ENCODE measurements at regions of chr12 and their contacts with region 1.

Region 1: DNA sequence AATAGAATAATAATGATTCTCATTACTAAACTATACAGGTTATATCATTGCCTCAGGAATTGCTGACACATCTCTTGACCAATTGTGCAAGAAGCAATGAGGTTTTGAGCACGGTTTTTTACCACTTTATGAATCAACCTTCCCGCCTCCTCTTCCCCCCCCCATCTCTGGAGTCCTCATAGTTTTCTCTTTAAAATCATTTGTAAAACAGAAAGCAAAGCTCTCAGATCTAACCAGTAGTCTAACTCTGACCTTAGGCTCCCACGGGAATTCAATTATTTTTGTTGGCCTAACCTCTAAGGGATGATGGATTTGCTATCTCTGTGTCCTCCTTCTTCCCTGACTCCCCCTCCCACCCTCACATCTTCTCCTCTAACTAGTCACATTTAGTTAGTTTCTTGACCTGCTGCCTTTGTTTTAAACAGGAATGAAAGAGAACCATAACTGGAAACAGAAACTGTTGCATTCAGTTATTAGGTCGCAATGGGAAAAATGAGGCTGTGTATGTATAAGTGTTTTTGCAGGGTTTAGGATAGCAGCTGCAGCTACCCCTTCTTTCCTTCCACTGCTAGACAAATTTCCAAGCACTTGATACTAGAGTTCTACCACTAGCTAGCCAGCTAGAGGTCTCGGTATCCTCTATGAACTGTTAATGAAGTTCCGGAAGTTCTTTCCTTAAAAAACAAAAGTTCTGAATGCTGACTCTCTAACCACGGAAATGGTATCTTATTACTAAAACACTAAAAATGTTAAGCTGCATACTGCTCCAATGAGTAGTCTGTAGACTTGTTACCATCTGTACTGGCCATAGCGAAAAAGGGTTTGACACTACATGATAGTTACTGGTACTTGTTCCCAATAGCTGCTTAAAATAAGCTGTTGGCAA is 65.4 kb downstream of the TAOK3 start:
- DNase-seq: peak; percentile 71 to 85 (median 83)
- H3K4me3 ChIP-seq: peak overlapping the region; percentile 8 to 70 (median 59)
- H3K4me3 Mint-ChIP-seq: peak overlapping the region; percentile 71 to 75
- H3K27ac ChIP-seq: peak overlapping the region; percentile 13 to 81
- H3K27ac Mint-ChIP-seq: peak overlapping the region; percentile 86 to 94 (median 93)
- H3K4me1 ChIP-seq: peaks cover 26 to 40% of the 10 kb centered on the region in 2 donors
- H3K4me1 Mint-ChIP-seq: peaks cover 34% of the 10 kb centered on the region
- H3K27me3 ChIP-seq: no peaks in the 10 kb centered on the region
- H3K27me3 Mint-ChIP-seq: no peaks in the 10 kb centered on the region
- CTCF ChIP-seq: no peak

Region 2: DNA sequence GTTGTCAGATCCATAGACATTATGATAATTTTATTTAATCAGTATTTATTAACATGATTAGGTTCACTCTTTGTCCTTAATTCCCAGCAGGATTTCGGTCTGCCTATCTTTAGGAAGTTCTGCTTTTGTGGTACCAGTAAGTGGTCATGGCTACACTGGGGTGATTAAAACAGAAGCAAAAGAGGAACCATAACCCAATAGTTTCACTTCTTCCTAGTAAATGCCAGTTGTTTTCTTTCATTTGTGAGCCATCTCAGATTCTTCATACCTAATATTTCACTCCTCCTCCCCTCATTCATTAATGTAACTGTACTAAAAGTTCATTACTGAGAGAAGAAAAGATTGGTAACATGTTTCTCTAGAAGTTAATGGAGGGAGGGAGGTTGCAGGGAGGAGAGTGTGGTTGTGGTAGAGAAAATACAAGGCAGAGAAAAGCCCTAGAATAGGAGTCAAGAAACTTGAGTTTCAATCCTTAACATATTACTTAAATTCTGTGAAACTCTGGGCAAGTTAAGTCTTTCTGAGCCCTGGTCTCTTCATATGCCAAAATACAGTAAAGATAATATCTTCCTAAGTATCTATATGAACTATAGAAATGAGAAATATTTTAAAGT is 70.2 kb before region 1 on chr12:
- intact Hi-C with region 1: loop called in 1 of 2 experiments (anchors 10 kb)
- DNase-seq: peak; percentile 57 to 89 (median 80)
- H3K4me3 ChIP-seq: peak overlapping the region in 2 of 3 experiments; percentile 7 to 54
- H3K4me3 Mint-ChIP-seq: peak overlapping the region in 1 of 2 donors; percentile 80
- H3K27ac ChIP-seq: peak overlapping the region in 1 of 2 donors; percentile 82
- H3K27ac Mint-ChIP-seq: peak overlapping the region; percentile 87 to 97 (median 94)
- H3K4me1 ChIP-seq: peaks cover 25 to 32% of the 10 kb centered on the region in 2 donors
- H3K4me1 Mint-ChIP-seq: peaks cover 23% of the 10 kb centered on the region
- H3K27me3 ChIP-seq: no peaks in the 10 kb centered on the region
- H3K27me3 Mint-ChIP-seq: no peaks in the 10 kb centered on the region
- CTCF ChIP-seq: no peak

Region 3: GRCh38 chr12:118249547-118249946 is 57.8 kb before region 1 on chr12:
- intact Hi-C with region 1: no loop called
- DNase-seq: no peak
- H3K4me3 ChIP-seq: no peak overlapping the region
- H3K4me3 Mint-ChIP-seq: no peak overlapping the region
- H3K27ac ChIP-seq: no peak overlapping the region
- H3K27ac Mint-ChIP-seq: no peak overlapping the region
- H3K4me1 ChIP-seq: no peaks in the 10 kb centered on the region
- H3K4me1 Mint-ChIP-seq: peaks cover 3% of the 10 kb centered on the region
- H3K27me3 ChIP-seq: no peaks in the 10 kb centered on the region
- H3K27me3 Mint-ChIP-seq: no peaks in the 10 kb centered on the region
- CTCF ChIP-seq: no peak

Region 4: GRCh38 chr12:118357257-118358007 is 50.1 kb after region 1 on chr12:
- intact Hi-C with region 1: loop called in 1 of 2 experiments (anchors 5 kb)
- DNase-seq: peak; percentile 91 to 93 (median 92)
- H3K4me3 ChIP-seq: peak overlapping the region; percentile 25 to 69 (median 47)
- H3K4me3 Mint-ChIP-seq: peak overlapping the region; percentile 54 to 76
- H3K27ac ChIP-seq: peak overlapping the region; percentile 95 to 97
- H3K27ac Mint-ChIP-seq: peak overlapping the region; percentile 96 to 99 (median 99)
- H3K4me1 ChIP-seq: peaks cover 70 to 92% of the 10 kb centered on the region in 2 donors
- H3K4me1 Mint-ChIP-seq: peaks cover 77% of the 10 kb centered on the region
- H3K27me3 ChIP-seq: no peaks in the 10 kb centered on the region
- H3K27me3 Mint-ChIP-seq: no peaks in the 10 kb centered on the region
- CTCF ChIP-seq: peak; percentile 72